GM18951 (cell line): ENCODE measurements at regions of chr6 and their contacts with region 1.

Region 1: DNA sequence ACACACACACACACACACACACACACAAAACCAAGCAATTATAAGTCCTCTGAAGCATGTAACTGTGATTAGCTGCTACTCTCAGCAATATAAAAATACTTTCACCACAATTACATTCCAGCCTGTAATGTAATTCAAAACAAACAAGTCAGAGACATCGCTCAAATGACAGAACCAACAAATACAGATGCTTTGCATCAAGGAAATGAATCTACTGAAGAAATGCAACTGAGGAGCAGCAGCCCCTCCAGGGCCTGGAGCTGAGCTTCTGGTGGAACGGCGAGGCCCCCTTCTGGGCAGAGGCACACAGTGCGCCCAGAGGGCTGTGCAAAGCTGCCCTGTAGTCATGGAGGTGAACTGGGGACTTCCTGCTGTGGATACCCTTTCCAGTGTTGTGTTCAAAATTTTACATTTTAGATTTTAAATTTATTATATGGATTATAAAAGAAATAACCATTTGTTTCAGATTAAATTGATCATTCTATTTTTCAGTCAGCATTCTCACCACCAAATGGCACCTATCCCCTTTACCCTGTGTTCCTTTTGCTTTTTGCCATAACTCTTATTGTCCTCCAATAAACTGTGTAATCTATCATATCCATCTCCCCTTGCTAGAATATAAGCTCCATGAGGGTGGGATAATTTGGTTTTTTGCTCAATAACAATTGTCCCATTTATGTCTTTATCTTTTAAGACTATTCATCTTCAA is 23.2 kb downstream of the ADAT2 start:
- POLR2A ChIP-seq: no peak

Region 2: GRCh38 chr6:142702501-142703460 is 724.5 kb before region 1 on chr6:
- in situ Hi-C with region 1: loop called (anchors 10 kb)
- POLR2A ChIP-seq: no peak